ENCODE measurements at regions of chr2 and their contacts with region 1.

Region 1: DNA sequence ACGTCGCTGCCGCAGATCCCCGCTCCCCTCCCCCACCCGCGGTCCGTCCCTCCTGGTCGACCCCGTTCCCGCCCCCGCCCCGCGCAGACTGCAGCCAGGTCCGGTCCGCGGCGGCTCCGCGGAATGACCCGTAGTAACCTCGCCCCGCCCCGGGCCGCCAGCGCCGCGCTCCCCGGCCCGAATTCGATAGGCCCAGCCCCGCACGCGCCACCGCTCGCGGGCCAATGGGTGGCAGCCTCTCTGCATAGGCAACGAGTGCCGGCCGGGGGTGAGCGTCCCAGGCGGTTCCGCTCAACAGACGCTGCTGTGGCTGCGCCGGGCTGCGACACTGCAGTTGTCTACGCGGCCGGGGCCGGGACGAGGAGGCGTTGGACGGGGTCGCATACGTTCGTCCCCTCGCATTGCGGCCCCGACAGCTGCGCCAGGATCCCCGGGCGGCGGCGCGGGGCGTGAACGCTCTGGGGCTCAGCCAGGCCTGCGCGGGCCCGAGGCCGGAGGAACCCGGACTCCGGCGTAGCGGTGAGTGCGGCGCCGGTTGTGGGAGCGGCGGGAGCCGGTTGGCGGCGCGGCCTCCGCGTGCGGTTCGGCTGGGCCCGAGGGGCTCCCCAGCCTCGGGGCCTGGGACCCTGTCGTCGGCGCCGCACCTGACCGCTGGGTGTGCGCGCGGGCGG is at the start of gene ACSL3:
- H3K4me3 ChIP-seq: peak within 1 kb of the TSS; percentile 83
- H3K27ac ChIP-seq: peak within 1 kb of the TSS; percentile 96
- H3K4me1 ChIP-seq: peaks cover 27% of the 10 kb centered on the region
- CTCF ChIP-seq: peak; percentile 76

Region 2: GRCh38 chr2:222707689-222708525 is 153.0 kb before region 1 on chr2:
- CTCF ChIA-PET with region 1: interaction called, 10 read pairs
- POLR2A ChIA-PET with region 1: interaction called, 19 read pairs
- H3K4me3 ChIP-seq: no peak overlapping the region
- H3K27ac ChIP-seq: no peak overlapping the region
- H3K4me1 ChIP-seq: no peaks in the 10 kb centered on the region
- CTCF ChIP-seq: peak; percentile 79

Region 3: GRCh38 chr2:222959336-222959735 is 98.5 kb after region 1 on chr2:
- CTCF ChIA-PET with region 1: no interaction called
- POLR2A ChIA-PET with region 1: no interaction called
- H3K4me3 ChIP-seq: no peak overlapping the region
- H3K27ac ChIP-seq: no peak overlapping the region
- H3K4me1 ChIP-seq: no peaks in the 10 kb centered on the region
- CTCF ChIP-seq: no peak

Region 4: DNA sequence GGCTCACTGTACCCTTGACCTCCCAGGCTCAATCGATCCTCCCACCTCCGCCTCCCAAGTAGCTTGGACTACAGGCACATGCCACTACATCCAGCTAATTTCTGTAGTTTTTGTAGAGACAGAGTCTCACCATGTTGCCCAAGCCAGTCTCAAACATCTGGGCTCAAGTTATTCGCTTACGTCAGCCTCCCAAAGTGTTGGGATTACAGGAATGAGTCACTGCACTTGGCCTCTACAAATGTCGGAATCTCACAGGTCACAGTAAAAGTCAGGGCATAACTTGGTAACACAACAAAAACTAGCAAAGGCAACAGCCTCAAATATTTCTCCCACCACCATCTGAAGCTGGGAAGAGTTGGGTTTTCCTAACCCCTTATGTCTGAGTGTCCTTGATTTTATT is 716.0 kb after region 1 on chr2:
- CTCF ChIA-PET with region 1: no interaction called
- POLR2A ChIA-PET with region 1: no interaction called
- H3K4me3 ChIP-seq: no peak overlapping the region
- H3K27ac ChIP-seq: peak overlapping the region; percentile 11; the same call in 1 of the 2 replicates
- H3K4me1 ChIP-seq: peaks cover 2% of the 10 kb centered on the region; the same call in 1 of the 2 replicates
- CTCF ChIP-seq: no peak